Endothelial cell of umbilical vein (primary cell): ENCODE measurements at regions of chr17 and their contacts with region 1.

Region 1: GRCh38 chr17:57243171-57243948 is 13.0 kb upstream of the MSI2 start:
- DNase-seq: peak; percentile 66
- H3K4me3 ChIP-seq: no peak overlapping the region
- H3K27ac ChIP-seq: no peak overlapping the region
- H3K4me1 ChIP-seq: no peaks in the 10 kb centered on the region
- H3K27me3 ChIP-seq: peaks cover 13 to 16% of the 10 kb centered on the region in 2 experiments
- CTCF ChIP-seq: peak; percentile 100
- POLR2A ChIP-seq: no peak

Region 2: GRCh38 chr17:56528696-56529095 is 714.7 kb before region 1 on chr17:
- CTCF ChIA-PET with region 1: no interaction called
- POLR2A ChIA-PET with region 1: no interaction called
- dilution Hi-C with region 1: no loop called
- intact Hi-C with region 1: no loop called
- DNase-seq: no peak
- H3K4me3 ChIP-seq: no peak overlapping the region
- H3K27ac ChIP-seq: no peak overlapping the region
- H3K4me1 ChIP-seq: no peaks in the 10 kb centered on the region
- H3K27me3 ChIP-seq: no peaks in the 10 kb centered on the region
- CTCF ChIP-seq: no peak
- POLR2A ChIP-seq: no peak

Region 3: DNA sequence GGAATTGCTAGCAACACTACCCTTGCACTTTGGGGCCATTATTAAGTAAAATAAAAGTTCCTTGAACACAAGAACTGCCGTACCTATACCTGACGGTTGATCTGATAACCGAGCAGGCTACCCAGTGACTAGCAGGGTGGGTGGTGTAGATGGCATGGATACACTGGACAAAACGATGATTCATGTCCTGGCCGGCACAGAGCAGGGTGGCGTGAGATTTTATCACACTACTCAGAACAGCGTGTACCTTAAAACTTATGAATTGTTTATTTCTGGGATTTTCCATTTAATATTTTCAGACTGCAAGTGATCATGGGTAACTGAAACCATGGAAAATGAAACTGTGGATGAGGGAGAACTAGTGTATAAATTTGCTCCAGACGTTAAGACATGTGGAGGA is 28.0 kb before region 1 on chr17:
- CTCF ChIA-PET with region 1: interaction called, 12 read pairs
- POLR2A ChIA-PET with region 1: no interaction called
- dilution Hi-C with region 1: no loop called
- intact Hi-C with region 1: no loop called
- DNase-seq: peak; percentile 54
- H3K4me3 ChIP-seq: no peak overlapping the region
- H3K27ac ChIP-seq: peak overlapping the region; percentile 46
- H3K4me1 ChIP-seq: peaks cover 37% of the 10 kb centered on the region
- H3K27me3 ChIP-seq: no peaks in the 10 kb centered on the region
- CTCF ChIP-seq: no peak
- POLR2A ChIP-seq: no peak

Region 4: GRCh38 chr17:57331423-57331822 is 88.1 kb after region 1 on chr17:
- CTCF ChIA-PET with region 1: interaction called, 11 read pairs
- POLR2A ChIA-PET with region 1: no interaction called
- dilution Hi-C with region 1: no loop called
- intact Hi-C with region 1: no loop called
- DNase-seq: no peak
- H3K4me3 ChIP-seq: no peak overlapping the region
- H3K27ac ChIP-seq: no peak overlapping the region
- H3K4me1 ChIP-seq: no peaks in the 10 kb centered on the region
- H3K27me3 ChIP-seq: no peaks in the 10 kb centered on the region
- CTCF ChIP-seq: no peak
- POLR2A ChIP-seq: no peak

Region 5: DNA sequence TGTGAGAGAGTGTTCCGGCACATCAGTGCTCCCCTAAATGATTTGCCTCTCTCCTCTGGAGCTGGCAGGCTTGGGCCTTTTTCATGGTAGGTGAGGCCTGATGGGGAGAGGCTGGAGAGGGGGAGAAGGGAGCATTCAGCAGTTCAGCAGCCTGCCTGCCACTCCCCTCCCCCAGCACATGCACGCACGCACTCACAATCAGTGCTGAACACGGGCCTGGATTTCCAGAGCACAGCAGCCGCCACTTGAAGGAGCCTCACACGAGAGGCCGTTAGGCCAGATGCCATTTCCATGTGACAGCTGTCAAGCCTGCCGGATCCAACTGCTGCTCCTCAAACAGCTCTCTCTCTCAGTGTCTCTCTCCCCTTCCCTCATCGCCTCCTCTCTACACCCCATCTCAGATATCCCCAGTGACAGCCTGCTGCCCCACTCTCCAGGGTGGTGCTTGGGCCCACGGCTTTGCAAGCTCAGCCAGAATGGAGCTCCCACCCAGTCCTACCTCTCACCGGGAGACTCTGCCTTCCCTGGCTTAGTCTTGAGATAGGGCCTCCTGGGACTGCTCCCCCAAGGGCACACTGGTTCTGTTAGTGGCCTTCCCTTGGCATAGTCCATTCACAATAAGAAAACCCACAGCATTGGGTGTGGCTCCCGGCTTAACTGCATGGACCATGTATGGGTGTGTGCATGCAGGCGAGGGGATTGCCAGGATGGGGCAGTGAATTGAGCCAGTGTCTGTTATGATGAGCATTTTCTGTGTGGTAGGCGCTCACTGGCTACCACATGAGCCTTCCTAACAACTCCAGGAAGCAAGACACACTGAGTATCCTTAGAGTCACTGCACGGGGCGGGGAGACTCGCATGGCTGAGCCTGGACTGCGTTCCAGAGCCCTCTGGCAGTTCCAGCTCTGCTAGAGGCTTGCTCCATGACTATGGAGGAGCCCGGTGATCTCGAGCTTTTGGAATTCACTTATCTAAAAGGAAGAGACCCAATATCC is 275.5 kb after region 1 on chr17:
- CTCF ChIA-PET with region 1: interaction called, 99 read pairs
- POLR2A ChIA-PET with region 1: no interaction called
- dilution Hi-C with region 1: no loop called
- intact Hi-C with region 1: loop called (anchors 1 kb)
- DNase-seq: no peak
- H3K4me3 ChIP-seq: no peak overlapping the region
- H3K27ac ChIP-seq: no peak overlapping the region
- H3K4me1 ChIP-seq: no peaks in the 10 kb centered on the region
- H3K27me3 ChIP-seq: no peaks in the 10 kb centered on the region
- CTCF ChIP-seq: no peak
- POLR2A ChIP-seq: no peak

Region 6: GRCh38 chr17:57588074-57588473 is 344.7 kb after region 1 on chr17:
- CTCF ChIA-PET with region 1: interaction called, 10 read pairs
- POLR2A ChIA-PET with region 1: no interaction called
- dilution Hi-C with region 1: no loop called
- intact Hi-C with region 1: no loop called
- DNase-seq: no peak
- H3K4me3 ChIP-seq: no peak overlapping the region
- H3K27ac ChIP-seq: no peak overlapping the region
- H3K4me1 ChIP-seq: no peaks in the 10 kb centered on the region
- H3K27me3 ChIP-seq: peaks cover 0 to 7% of the 10 kb centered on the region in 2 experiments
- CTCF ChIP-seq: no peak
- POLR2A ChIP-seq: no peak

Region 7: DNA sequence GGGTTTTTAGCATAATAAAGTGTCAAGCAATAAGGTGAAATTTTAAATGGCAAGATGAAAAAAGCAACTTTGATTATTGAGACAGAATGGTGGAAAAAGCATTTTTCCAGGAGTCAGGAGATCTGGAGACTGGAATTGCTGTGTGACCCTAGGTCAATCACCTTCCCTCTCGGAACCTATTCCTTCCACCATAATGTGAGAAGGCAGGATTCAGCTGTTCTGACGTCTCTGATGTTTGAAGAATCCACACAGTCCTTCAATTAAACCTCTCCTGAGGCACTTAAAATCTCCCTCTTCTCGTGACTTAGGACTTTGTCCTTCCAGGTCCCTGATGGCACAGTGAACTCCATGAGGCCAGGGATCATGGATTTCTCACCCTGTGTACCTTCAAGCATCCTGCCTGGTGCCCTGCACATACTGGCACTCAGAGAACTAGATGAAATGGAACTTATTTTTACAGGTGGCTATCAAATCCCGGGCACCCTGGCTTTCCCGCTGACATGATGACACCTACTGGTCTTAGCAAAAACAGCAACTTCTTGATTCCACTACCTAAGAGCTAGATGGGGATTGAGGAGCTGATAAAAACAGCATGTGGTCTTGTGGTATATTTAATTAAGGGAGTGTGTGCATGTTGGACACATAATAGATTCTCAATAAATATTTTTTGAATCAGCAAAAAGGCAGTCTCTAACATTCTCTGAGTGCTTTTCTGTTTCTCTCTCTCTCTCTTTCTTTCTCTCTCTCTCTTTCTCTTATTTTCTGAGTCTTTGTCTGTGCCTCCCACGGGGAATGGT is 504.1 kb after region 1 on chr17:
- CTCF ChIA-PET with region 1: interaction called, 88 read pairs
- POLR2A ChIA-PET with region 1: no interaction called
- dilution Hi-C with region 1: no loop called
- intact Hi-C with region 1: loop called (anchors 1 kb)
- DNase-seq: peak; percentile 74
- H3K4me3 ChIP-seq: no peak overlapping the region
- H3K27ac ChIP-seq: no peak overlapping the region
- H3K4me1 ChIP-seq: no peaks in the 10 kb centered on the region
- H3K27me3 ChIP-seq: peaks cover 6 to 20% of the 10 kb centered on the region in 2 experiments
- CTCF ChIP-seq: peak; percentile 68 to 73
- POLR2A ChIP-seq: no peak